AG04450 (cell line): ENCODE measurements at regions of chr11 and their contacts with region 1.

Region 1: DNA sequence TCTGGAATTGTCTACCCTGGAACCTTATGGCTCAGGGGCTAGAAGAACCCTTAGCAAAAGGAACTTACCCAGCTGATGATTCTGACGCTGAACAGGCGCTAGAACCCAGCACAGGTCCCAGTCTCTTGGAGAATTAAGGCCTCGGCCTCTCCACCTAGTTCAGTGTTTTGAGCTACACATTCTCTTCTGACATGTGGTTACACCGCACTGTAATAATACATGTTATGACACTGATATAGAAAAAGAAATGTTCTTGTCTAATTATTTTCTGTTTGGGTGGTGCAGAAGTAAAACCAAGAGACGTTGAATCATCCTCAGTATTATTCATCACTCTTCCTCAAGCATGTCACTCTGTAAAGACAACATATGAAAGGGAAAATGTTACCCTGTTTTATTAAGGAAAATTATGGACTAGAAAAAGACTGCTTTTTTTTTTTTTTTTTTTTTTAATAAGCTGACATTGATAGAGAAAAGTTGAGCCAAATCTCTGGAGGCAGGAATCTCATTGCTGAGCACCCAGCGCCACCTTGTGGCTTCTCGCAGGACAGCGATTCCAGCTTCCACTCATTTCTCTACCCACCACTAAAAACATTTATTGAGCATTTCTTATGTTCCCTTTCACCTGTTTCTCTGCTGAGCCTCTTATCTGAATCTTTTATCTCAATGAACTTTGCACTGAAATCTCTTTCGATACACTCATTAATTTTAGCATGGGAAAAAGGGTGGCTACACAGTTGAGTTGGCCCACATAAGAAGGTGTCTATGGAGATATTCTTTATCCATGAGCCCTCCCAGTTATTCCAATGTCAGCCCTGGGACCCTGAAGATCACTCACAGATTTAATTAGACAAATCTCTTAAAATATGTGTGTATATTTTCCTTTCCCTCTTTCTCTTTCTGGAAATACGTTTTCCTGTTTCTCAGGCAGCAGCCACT is 12.6 kb upstream of the APLNR start:
- DNase-seq: peak; percentile 39
- H3K4me3 ChIP-seq: no peak overlapping the region
- H3K27ac ChIP-seq: no peak overlapping the region
- H3K27me3 ChIP-seq: no peaks in the 10 kb centered on the region
- CTCF ChIP-seq: peak; percentile 96

Region 2: GRCh38 chr11:56841210-56841810 is 408.3 kb before region 1 on chr11:
- CTCF ChIA-PET with region 1: interaction called, 236 read pairs
- POLR2A ChIA-PET with region 1: interaction called, 4 read pairs
- DNase-seq: peak; percentile 13
- H3K4me3 ChIP-seq: no peak overlapping the region
- H3K27ac ChIP-seq: no peak overlapping the region
- H3K27me3 ChIP-seq: no peaks in the 10 kb centered on the region
- CTCF ChIP-seq: peak; percentile 67

Region 3: GRCh38 chr11:57031556-57031955 is 218.1 kb before region 1 on chr11:
- CTCF ChIA-PET with region 1: interaction called, 12 read pairs
- POLR2A ChIA-PET with region 1: no interaction called
- DNase-seq: no peak
- H3K4me3 ChIP-seq: no peak overlapping the region
- H3K27ac ChIP-seq: no peak overlapping the region
- H3K27me3 ChIP-seq: no peaks in the 10 kb centered on the region
- CTCF ChIP-seq: no peak

Region 4: DNA sequence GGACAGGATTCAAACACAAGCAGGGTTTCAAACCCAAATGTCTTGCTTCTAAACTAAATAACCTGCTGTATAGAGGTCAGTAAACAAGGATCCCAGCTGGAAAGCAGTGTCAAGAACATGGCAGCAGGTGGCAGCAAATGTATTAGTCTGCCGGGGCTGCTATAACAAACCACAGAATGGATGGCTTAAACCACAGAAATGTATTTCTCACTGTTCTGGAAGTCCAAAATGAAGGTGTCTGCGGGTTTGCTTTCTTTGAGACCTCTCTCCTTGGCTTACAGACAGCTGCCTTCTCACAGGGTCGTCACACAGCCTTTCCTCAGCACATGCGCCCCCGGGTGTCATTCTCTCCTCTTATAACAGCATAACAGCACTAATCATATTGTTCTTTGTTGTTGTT is 133.0 kb before region 1 on chr11:
- CTCF ChIA-PET with region 1: interaction called, 331 read pairs
- POLR2A ChIA-PET with region 1: no interaction called
- DNase-seq: peak; percentile 18
- H3K4me3 ChIP-seq: no peak overlapping the region
- H3K27ac ChIP-seq: no peak overlapping the region
- H3K27me3 ChIP-seq: no peaks in the 10 kb centered on the region
- CTCF ChIP-seq: peak; percentile 58

Region 5: GRCh38 chr11:57213342-57214095 is 36.1 kb before region 1 on chr11:
- CTCF ChIA-PET with region 1: interaction called, 119 read pairs
- POLR2A ChIA-PET with region 1: no interaction called
- DNase-seq: no peak
- H3K4me3 ChIP-seq: no peak overlapping the region
- H3K27ac ChIP-seq: peak overlapping the region; percentile 57
- H3K27me3 ChIP-seq: peaks cover 3% of the 10 kb centered on the region
- CTCF ChIP-seq: no peak

Region 6: GRCh38 chr11:57269571-57270021 is 19.9 kb after region 1 on chr11:
- CTCF ChIA-PET with region 1: interaction called, 117 read pairs
- POLR2A ChIA-PET with region 1: no interaction called
- DNase-seq: no peak
- H3K4me3 ChIP-seq: no peak overlapping the region
- H3K27ac ChIP-seq: no peak overlapping the region
- H3K27me3 ChIP-seq: peaks cover 9% of the 10 kb centered on the region
- CTCF ChIP-seq: no peak

Region 7: DNA sequence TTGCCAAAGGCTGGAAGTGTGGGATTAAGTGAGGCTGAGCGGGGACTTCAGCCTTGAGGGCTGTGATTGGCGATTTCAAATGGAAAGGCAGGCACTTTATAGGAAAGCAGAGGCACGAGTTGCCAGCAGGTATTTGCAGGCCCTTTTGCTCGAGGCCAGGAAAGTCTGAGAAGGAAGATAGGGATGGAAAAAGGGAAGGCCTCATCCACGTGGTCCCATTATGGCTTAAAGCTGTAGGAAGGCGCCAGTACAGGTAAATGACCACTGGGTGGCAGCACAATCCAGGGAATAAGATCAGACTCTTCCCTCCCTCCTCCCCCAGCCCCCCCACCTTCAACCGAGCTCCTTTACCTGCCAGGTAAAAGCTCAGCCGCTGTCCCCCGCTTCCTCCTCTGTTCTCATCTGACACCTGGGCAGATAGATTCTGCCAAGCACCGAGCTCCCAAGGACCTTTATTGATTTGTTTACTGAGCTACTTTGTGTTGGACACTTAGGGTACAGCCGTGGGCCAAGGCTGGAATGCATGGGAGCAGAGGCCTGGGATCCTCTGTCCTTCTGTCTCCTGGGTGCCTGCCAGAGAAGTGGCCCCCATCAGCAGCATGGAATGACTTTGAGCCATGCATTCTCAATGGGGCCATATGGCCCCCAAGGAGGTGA is 96.0 kb after region 1 on chr11:
- CTCF ChIA-PET with region 1: interaction called, 23 read pairs
- POLR2A ChIA-PET with region 1: no interaction called
- DNase-seq: no peak
- H3K4me3 ChIP-seq: no peak overlapping the region
- H3K27ac ChIP-seq: no peak overlapping the region
- H3K27me3 ChIP-seq: peaks cover 7% of the 10 kb centered on the region
- CTCF ChIP-seq: peak; percentile 65